CD8-positive, alpha-beta T cell (primary cell): ENCODE measurements at regions of chr2 and their contacts with region 1.

Region 1: GRCh38 chr2:30231212-30231995 is at the start of gene LBH:
- DNase-seq: peak; percentile 82 to 97 (median 89)
- ATAC-seq: peak; percentile 48
- H3K4me3 ChIP-seq: peak within 1 kb of the TSS; percentile 89 to 96
- H3K4me3 Mint-ChIP-seq: peak within 1 kb of the TSS; percentile 94
- H3K27ac ChIP-seq: peak within 1 kb of the TSS; percentile 92 to 99
- H3K27ac Mint-ChIP-seq: peak within 1 kb of the TSS; percentile 96
- H3K4me1 ChIP-seq: peaks cover 52% of the 10 kb centered on the region
- H3K4me1 Mint-ChIP-seq: peaks cover 64% of the 10 kb centered on the region
- H3K27me3 ChIP-seq: no peaks in the 10 kb centered on the region
- H3K27me3 Mint-ChIP-seq: no peaks in the 10 kb centered on the region
- CTCF ChIP-seq: no peak
- total RNA-seq, gene LBH: 127 to 133 TPM

Region 2: GRCh38 chr2:29829841-29830240 is 401.6 kb before region 1 on chr2:
- CTCF ChIA-PET with region 1: no interaction called
- POLR2A ChIA-PET with region 1: no interaction called
- intact Hi-C with region 1: no loop called
- DNase-seq: no peak
- ATAC-seq: no peak
- H3K4me3 ChIP-seq: no peak overlapping the region
- H3K4me3 Mint-ChIP-seq: no peak overlapping the region
- H3K27ac ChIP-seq: no peak overlapping the region
- H3K27ac Mint-ChIP-seq: no peak overlapping the region
- H3K4me1 ChIP-seq: no peaks in the 10 kb centered on the region
- H3K4me1 Mint-ChIP-seq: no peaks in the 10 kb centered on the region
- H3K27me3 ChIP-seq: peaks cover 0 to 5% of the 10 kb centered on the region in 2 experiments
- H3K27me3 Mint-ChIP-seq: peaks cover 33% of the 10 kb centered on the region
- CTCF ChIP-seq: no peak

Region 3: DNA sequence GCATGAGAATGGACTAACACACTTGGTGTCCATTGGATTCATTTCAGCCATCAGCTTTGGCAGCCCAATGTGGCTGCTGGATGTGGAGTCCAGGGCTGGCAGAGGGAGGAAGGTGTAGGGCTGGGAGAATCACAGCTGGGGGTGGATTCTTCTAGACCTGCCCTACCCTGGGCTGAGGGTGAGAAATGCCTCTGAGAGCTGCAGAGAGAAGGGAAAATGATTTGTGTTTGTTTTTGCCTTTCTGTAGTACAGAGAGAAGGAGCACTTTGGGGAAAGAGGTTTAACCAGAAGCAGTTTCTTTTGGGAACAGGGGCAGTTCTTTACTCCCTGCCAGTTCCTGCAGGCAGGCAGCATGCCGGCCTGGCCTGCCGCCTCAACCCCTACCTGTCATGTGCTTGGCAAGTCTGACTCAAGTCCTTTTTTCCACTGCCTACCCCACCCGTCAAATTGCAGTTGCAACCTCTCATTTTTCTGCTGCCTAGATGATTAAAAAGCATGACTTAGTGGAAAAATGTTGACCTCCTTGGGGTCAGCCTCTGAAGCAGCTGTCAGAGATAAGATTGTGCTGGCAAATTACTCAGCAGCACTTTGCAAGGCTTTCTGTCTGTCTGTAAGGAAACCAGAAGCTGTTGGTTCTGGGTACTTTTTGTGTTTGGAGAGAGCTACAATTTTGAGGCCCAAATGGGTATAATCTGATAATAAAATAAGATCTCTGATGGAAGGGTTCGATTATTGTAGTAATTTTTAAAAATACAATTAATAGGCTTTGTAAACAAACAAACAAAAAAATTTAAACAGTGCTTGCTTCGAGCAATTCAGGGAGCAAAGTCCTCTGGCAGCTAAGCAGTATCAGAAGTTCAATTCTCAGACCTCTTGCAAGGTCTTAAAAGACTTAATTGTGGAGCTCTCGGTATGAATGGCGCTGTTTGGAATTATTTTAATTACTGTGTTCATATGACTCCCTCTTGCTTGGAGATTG is 21.6 kb after region 1 on chr2:
- CTCF ChIA-PET with region 1: interaction called, 230 read pairs
- POLR2A ChIA-PET with region 1: interaction called, 123 read pairs
- intact Hi-C with region 1: loop called in 1 of 2 experiments (anchors 1 kb)
- DNase-seq: peak in 7 of 9 experiments; percentile 36 to 64 (median 55)
- ATAC-seq: peak; percentile 37
- H3K4me3 ChIP-seq: peak overlapping the region in 1 of 2 experiments; percentile 17
- H3K4me3 Mint-ChIP-seq: peak overlapping the region; percentile 46
- H3K27ac ChIP-seq: peak overlapping the region; percentile 28 to 68
- H3K27ac Mint-ChIP-seq: peak overlapping the region; percentile 98
- H3K4me1 ChIP-seq: peaks cover 97% of the 10 kb centered on the region
- H3K4me1 Mint-ChIP-seq: peaks cover 96% of the 10 kb centered on the region
- H3K27me3 ChIP-seq: no peaks in the 10 kb centered on the region
- H3K27me3 Mint-ChIP-seq: no peaks in the 10 kb centered on the region
- CTCF ChIP-seq: no peak

Region 4: DNA sequence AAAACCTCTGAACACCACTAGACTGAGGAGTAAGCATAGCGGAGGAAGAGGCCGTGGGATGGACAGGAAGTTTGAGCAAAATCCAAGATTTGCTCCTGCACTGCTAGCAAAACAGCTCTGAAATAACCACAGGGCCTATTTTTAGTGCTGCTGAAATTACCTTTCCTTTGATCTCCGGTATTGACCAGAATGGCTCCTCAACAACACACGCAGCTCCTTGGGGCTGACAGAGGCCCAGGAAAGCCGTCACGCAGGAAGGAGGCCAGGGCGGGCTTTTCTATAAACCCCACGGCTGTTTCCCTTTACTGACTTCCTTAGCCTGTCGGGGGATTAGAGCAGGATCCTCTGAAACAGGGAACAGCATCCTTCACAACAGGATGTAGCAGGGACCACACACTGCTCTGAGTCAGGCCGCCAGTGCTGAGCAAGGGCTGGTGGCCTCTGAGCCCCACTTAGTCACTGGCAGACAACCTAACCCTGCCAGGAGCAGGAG is 134.8 kb after region 1 on chr2:
- CTCF ChIA-PET with region 1: interaction called, 11 read pairs
- POLR2A ChIA-PET with region 1: interaction called, 3 read pairs
- intact Hi-C with region 1: no loop called
- DNase-seq: peak in 6 of 9 experiments; percentile 25 to 68 (median 37)
- ATAC-seq: peak; percentile 70
- H3K4me3 ChIP-seq: no peak overlapping the region
- H3K4me3 Mint-ChIP-seq: no peak overlapping the region
- H3K27ac ChIP-seq: no peak overlapping the region
- H3K27ac Mint-ChIP-seq: peak overlapping the region; percentile 19
- H3K4me1 ChIP-seq: peaks cover 33% of the 10 kb centered on the region
- H3K4me1 Mint-ChIP-seq: peaks cover 49% of the 10 kb centered on the region
- H3K27me3 ChIP-seq: no peaks in the 10 kb centered on the region
- H3K27me3 Mint-ChIP-seq: no peaks in the 10 kb centered on the region
- CTCF ChIP-seq: no peak

Region 5: DNA sequence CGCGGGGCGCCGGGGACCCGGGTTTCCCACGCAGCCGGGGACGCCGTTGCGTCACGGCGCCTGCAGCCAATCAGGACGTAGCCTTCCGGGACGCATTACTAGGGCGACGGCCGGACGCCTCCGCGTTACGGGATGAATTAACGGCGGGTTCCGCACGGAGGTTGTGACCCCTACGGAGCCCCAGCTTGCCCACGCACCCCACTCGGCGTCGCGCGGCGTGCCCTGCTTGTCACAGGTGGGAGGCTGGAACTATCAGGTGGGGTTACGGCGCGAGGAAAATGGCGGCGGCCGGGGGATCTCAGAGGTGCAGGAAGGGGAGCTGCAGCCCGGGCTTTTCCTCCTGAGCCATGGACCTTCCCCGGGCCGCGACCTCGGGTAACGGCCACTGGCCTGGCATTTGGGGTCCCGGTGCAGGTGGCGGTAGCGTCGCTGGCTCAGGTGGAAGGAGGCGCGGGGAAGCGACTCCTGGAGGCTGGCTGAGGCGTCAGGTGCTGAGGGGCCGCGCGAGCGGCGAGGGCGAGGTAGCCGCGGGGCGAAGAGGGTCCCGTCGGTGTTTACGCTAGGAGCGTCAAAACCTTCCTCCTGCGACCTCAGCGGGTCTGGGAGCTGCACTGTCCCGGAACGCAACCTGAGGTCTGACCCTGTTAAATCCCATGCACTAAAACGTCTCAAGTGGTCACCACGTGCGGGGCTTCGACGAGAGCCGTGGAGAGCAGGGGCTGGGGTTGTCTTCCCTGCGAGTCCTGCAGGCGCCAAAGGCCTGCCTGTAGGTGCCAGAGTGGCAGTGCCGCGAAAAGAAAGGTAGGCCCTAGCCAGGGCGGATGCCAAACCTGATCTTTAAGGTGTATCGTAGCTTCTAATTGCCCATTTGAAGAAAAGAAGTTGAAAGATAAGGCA is 216.0 kb after region 1 on chr2 and contains the start of gene LCLAT1:
- CTCF ChIA-PET with region 1: interaction called, 4 read pairs
- POLR2A ChIA-PET with region 1: interaction called, 20 read pairs
- intact Hi-C with region 1: loop called (anchors 1 kb)
- DNase-seq: peak; percentile 66 to 95 (median 84)
- ATAC-seq: peak; percentile 88
- H3K4me3 ChIP-seq: peak within 1 kb of the TSS; percentile 87 to 99
- H3K4me3 Mint-ChIP-seq: peak within 1 kb of the TSS; percentile 94
- H3K27ac ChIP-seq: peak within 1 kb of the TSS; percentile 92 to 95
- H3K27ac Mint-ChIP-seq: peak within 1 kb of the TSS; percentile 98
- H3K4me1 ChIP-seq: peaks cover 20% of the 10 kb centered on the region
- H3K4me1 Mint-ChIP-seq: peaks cover 45% of the 10 kb centered on the region
- H3K27me3 ChIP-seq: no peaks in the 10 kb centered on the region
- H3K27me3 Mint-ChIP-seq: no peaks in the 10 kb centered on the region
- CTCF ChIP-seq: no peak
- total RNA-seq, gene LCLAT1: 11.3 to 12.1 TPM

Region 6: DNA sequence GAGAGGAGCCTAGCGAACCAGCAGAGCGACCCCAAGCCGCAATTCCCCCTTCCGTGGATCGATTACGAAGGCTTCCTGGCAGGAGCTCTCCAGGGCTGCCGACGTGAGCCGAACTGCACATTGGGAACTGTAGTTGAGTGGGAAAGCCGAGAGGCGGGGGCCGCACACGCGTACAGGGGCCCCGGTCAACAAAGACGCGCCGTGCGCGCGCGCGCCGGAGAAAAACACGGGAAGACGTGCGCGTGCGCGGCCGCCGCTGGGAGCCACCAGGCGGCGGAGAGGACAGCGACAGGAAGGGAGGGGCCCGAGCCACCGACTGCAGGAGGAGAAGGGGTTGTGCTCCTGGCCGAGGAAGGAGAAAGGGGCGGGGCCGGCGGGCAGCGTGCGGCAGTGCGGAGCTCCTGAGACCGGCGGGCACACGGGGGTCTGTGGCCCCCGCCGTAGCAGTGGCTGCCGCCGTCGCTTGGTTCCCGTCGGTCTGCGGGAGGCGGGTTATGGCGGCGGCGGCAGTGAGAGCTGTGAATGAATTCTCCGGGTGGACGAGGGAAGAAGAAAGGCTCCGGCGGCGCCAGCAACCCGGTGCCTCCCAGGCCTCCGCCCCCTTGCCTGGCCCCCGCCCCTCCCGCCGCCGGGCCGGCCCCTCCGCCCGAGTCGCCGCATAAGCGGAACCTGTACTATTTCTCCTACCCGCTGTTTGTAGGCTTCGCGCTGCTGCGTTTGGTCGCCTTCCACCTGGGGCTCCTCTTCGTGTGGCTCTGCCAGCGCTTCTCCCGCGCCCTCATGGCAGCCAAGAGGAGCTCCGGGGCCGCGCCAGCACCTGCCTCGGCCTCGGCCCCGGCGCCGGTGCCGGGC is 1832.1 kb after region 1 on chr2 and contains the start of gene SPAST:
- CTCF ChIA-PET with region 1: no interaction called
- POLR2A ChIA-PET with region 1: no interaction called
- intact Hi-C with region 1: loop called in 1 of 2 experiments (anchors 5 kb)
- DNase-seq: peak; percentile 91 to 99 (median 96)
- ATAC-seq: peak; percentile 88
- H3K4me3 ChIP-seq: peak within 1 kb of the TSS; percentile 72 to 98
- H3K4me3 Mint-ChIP-seq: peak within 1 kb of the TSS; percentile 99
- H3K27ac ChIP-seq: peak within 1 kb of the TSS; percentile 76 to 81
- H3K27ac Mint-ChIP-seq: peak within 1 kb of the TSS; percentile 96
- H3K4me1 ChIP-seq: peaks cover 20% of the 10 kb centered on the region
- H3K4me1 Mint-ChIP-seq: peaks cover 36% of the 10 kb centered on the region
- H3K27me3 ChIP-seq: no peaks in the 10 kb centered on the region
- H3K27me3 Mint-ChIP-seq: no peaks in the 10 kb centered on the region
- CTCF ChIP-seq: peak; percentile 49
- total RNA-seq, gene SPAST: 7.4 to 9.4 TPM